ENCODE measurements at regions of chr2 and their contacts with region 1.

Region 1: DNA sequence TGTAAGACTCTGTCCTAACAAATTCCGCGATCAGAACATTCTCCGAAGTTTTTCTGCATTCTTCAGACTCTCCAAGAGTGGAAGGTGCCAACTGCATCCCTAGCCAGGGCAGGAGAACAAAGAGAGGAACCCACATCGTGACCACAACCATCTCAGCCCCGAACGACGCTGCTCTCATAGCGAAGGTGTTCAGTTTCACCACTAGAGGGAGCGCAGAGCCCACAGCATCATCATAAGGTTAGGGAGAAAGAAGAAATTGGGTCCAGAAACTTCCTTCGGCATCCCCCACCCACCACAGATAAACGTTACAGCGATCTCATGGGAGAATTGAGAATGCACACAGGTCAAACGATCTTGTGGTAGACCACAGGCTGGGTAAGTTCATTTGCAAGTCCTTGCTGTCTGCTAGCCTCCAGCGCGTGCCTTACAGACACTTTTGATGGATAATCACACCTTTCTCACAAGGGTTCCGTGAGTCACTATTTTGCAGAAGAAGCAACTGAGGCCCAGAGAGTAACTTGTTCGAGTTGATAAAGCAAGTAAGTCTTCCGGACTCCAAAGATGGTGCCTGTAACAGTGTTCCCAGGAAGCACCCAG is 53.7 kb upstream of the ARL4C start:
- DNase-seq: no peak
- H3K4me3 ChIP-seq: no peak overlapping the region
- H3K27ac ChIP-seq: no peak overlapping the region
- H3K4me1 ChIP-seq: peaks cover 0 to 6% (median 0%) of the 10 kb centered on the region in 3 donors
- H3K27me3 ChIP-seq: peaks cover 0 to 39% (median 0%) of the 10 kb centered on the region in 4 donors
- CTCF ChIP-seq: peak; percentile 76 to 94 (median 91)
- POLR2A ChIP-seq: no peak

Region 2: GRCh38 chr2:234710587-234710986 is 160.0 kb after region 1 on chr2:
- intact Hi-C with region 1: no loop called
- DNase-seq: no peak
- H3K4me3 ChIP-seq: no peak overlapping the region
- H3K27ac ChIP-seq: no peak overlapping the region
- H3K4me1 ChIP-seq: no peaks in the 10 kb centered on the region
- H3K27me3 ChIP-seq: peaks cover 0 to 25% (median 0%) of the 10 kb centered on the region in 4 donors
- CTCF ChIP-seq: no peak
- POLR2A ChIP-seq: no peak

Region 3: GRCh38 chr2:235106874-235107639 is 556.4 kb after region 1 on chr2:
- intact Hi-C with region 1: loop called (anchors 5 kb)
- DNase-seq: no peak
- H3K4me3 ChIP-seq: no peak overlapping the region
- H3K27ac ChIP-seq: no peak overlapping the region
- H3K4me1 ChIP-seq: no peaks in the 10 kb centered on the region
- H3K27me3 ChIP-seq: peaks cover 0 to 11% (median 0%) of the 10 kb centered on the region in 4 donors
- CTCF ChIP-seq: peak in 5 of 6 experiments; percentile 47 to 70 (median 54)
- POLR2A ChIP-seq: no peak